Mammary epithelial cell (primary cell): ENCODE measurements at regions of chr1 and their contacts with region 1.

Region 1: GRCh38 chr1:6454856-6455751 is 10.9 kb downstream of the TNFRSF25 start:
- DNase-seq: no peak
- H3K4me3 ChIP-seq: no peak overlapping the region
- H3K27ac ChIP-seq: no peak overlapping the region
- H3K4me1 ChIP-seq: no peaks in the 10 kb centered on the region
- H3K27me3 ChIP-seq: peaks cover 12% of the 10 kb centered on the region
- CTCF ChIP-seq: no peak

Region 2: GRCh38 chr1:6235296-6235677 is 219.8 kb before region 1 on chr1:
- CTCF ChIA-PET with region 1: no interaction called
- dilution Hi-C with region 1: no loop called
- in situ Hi-C with region 1: no loop called
- intact Hi-C with region 1: no loop called
- DNase-seq: no peak
- H3K4me3 ChIP-seq: peak overlapping the region; percentile 68 to 83 (median 70)
- H3K27ac ChIP-seq: peak overlapping the region; percentile 30
- H3K4me1 ChIP-seq: peaks cover 7% of the 10 kb centered on the region
- H3K27me3 ChIP-seq: no peaks in the 10 kb centered on the region
- CTCF ChIP-seq: no peak

Region 3: GRCh38 chr1:6440258-6441126 is 14.6 kb before region 1 on chr1:
- CTCF ChIA-PET with region 1: no interaction called
- dilution Hi-C with region 1: no loop called
- in situ Hi-C with region 1: no loop called
- intact Hi-C with region 1: no loop called
- DNase-seq: peak; percentile 73
- H3K4me3 ChIP-seq: peak overlapping the region in 1 of 3 experiments; percentile 33
- H3K27ac ChIP-seq: no peak overlapping the region
- H3K4me1 ChIP-seq: peaks cover 4% of the 10 kb centered on the region
- H3K27me3 ChIP-seq: no peaks in the 10 kb centered on the region
- CTCF ChIP-seq: no peak

Region 4: GRCh38 chr1:6579374-6580118 is 124.4 kb after region 1 on chr1 and contains the start of gene ZBTB48:
- CTCF ChIA-PET with region 1: no interaction called
- dilution Hi-C with region 1: loop called (anchors 10 kb)
- in situ Hi-C with region 1: no loop called
- intact Hi-C with region 1: no loop called
- DNase-seq: peak; percentile 97
- H3K4me3 ChIP-seq: peak within 1 kb of the TSS; percentile 62 to 78 (median 69)
- H3K27ac ChIP-seq: peak within 1 kb of the TSS; percentile 80
- H3K4me1 ChIP-seq: peaks cover 39% of the 10 kb centered on the region
- H3K27me3 ChIP-seq: no peaks in the 10 kb centered on the region
- CTCF ChIP-seq: no peak
- total RNA-seq, gene ZBTB48: 15.3 to 29.5 TPM